Cardiac septum (tissue), 1 donor: ENCODE measurements at regions of chr9 and their contacts with region 1.

Region 1: DNA sequence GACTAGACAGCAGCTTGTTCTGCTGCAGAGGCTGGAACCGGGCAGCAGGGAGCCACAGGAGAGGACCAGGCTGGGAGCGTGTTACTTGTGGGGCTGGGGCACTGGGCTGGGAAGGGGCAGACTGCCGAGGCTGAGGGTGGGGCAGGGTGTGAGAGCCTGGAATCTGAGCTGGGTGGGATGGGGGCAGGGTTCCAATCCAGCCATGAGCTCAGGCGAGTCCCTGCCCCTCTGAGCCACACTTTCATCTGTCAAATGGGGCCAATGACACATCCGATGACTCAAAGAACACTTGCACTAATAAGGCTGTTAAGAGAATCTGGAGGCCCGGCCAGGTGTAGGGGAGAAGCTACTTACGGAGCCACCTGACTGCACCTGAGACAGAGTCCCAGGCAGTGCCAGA is 18.7 kb upstream of the WDR38 start:
- DNase-seq: no peak

Region 2: GRCh38 chr9:124776954-124777665 is 57.5 kb before region 1 on chr9 and contains the start of gene OLFML2A:
- intact Hi-C with region 1: loop called (anchors 5 kb)
- DNase-seq: peak; percentile 76
- total RNA-seq, gene OLFML2A: 46.4 TPM